Brain microvascular endothelial cell (primary cell): ENCODE measurements at regions of chr16 and their contacts with region 1.

Region 1: DNA sequence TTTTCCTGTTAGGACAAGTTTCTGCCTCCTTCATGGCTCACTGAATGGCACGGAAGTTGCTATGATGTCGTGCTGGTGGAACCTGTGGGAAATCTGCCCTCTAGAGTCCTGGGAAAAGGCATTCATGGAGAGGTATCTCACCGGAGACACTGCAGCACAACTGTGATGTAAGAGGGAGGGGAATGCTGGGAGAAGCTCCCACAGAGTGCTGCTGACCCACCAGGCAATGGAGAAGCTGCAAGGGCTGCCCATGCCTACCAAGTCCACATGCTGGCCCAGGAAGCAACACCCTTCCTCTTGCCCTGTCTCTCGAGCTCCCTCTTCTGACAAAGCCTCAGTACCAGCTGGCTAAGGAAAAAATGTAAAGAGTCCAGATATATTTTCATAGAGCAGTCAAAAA is 45.2 kb upstream of the SLC5A11 start:
- DNase-seq: peak; percentile 23
- H3K4me3 ChIP-seq: no peak overlapping the region
- H3K27ac ChIP-seq: no peak overlapping the region
- H3K27me3 ChIP-seq: no peaks in the 10 kb centered on the region
- CTCF ChIP-seq: peak; percentile 43

Region 2: GRCh38 chr16:24568392-24568791 is 232.2 kb before region 1 on chr16:
- in situ Hi-C with region 1: loop called (anchors 25 kb)
- DNase-seq: no peak
- H3K4me3 ChIP-seq: no peak overlapping the region
- H3K27ac ChIP-seq: no peak overlapping the region
- H3K27me3 ChIP-seq: no peaks in the 10 kb centered on the region
- CTCF ChIP-seq: peak; percentile 8

Region 3: DNA sequence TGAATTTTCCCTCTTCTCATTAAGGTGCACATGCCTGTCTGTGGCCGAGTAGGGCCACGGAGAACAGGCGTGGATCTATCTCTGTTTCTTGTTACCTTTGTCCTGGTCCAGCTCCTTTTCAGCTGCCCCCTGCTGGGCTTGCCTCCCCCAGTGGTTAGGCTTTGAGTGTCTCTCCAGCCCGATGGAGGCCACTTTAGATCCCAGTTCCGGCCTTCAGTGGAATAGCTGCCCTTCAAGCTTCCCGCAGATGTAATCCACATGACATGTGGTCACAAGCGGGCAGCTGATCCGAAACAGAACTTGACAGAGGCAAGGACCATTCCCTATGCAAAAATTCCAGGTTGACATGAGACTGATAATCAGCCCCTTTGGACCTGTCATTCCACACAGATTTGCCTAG is 375.5 kb after region 1 on chr16:
- in situ Hi-C with region 1: no loop called
- DNase-seq: no peak
- H3K4me3 ChIP-seq: no peak overlapping the region
- H3K27ac ChIP-seq: no peak overlapping the region
- H3K27me3 ChIP-seq: no peaks in the 10 kb centered on the region
- CTCF ChIP-seq: peak; percentile 25